K562 (cell line): ENCODE measurements at regions of chr21 and their contacts with region 1.

Region 1: GRCh38 chr21:44011980-44012527 is at the start of gene TRAPPC10:
- DNase-seq: peak; percentile 89 to 95 (median 90)
- ATAC-seq: peak; percentile 77
- H3K4me3 ChIP-seq: peak within 1 kb of the TSS; percentile 77
- H3K27ac ChIP-seq: peak within 1 kb of the TSS; percentile 93
- H3K4me1 ChIP-seq: peaks cover 33 to 39% of the 10 kb centered on the region in 2 experiments
- H3K27me3 ChIP-seq: no peaks in the 10 kb centered on the region
- CTCF ChIP-seq: no peak
- EP300 ChIP-seq: peak; percentile 4; the same call in 1 of the 2 replicates
- POLR2A ChIP-seq: peak; percentile 90
- RAD21 ChIP-seq: peak in 1 of 2 experiments; percentile 14; a peak in 2 of 4 replicates
- polyA plus RNA-seq, gene TRAPPC10: 1.1 to 1.3 TPM

Region 2: DNA sequence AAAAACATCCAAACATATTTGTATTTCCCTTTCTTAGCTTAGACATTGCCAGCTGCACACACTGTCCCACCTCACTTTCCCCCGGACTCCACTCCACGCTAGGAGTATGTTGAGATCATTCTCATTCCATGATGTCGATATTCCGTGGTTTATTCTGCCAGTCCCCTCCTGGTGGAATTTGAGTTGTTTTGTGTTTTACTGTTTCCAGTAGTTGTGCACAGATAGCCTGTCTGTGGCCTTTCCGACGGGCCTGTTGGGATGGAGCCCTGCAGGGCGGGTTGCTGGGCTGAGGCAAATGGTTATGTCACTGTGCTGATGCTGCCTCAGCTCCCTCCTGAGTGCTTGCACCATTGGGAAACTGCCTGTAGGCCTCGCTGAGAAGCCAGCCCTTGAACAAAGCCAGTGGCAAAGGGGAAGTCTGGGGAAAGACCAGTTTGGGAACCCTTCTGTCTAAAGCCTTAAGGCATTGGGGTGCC is 12.9 kb after region 1 on chr21:
- CTCF ChIA-PET with region 1: no interaction called
- POLR2A ChIA-PET with region 1: interaction called, 19 read pairs
- in situ Hi-C with region 1: no loop called
- intact Hi-C with region 1: loop called (anchors 2 kb)
- DNase-seq: peak in 3 of 4 experiments; percentile 48 to 77 (median 60)
- ATAC-seq: peak; percentile 67
- H3K4me3 ChIP-seq: no peak overlapping the region
- H3K27ac ChIP-seq: peak overlapping the region; percentile 84
- H3K4me1 ChIP-seq: peaks cover 60 to 73% of the 10 kb centered on the region in 2 experiments
- H3K27me3 ChIP-seq: no peaks in the 10 kb centered on the region; a peak in 1 of 5 replicates
- CTCF ChIP-seq: peak in 1 of 3 experiments; percentile 14; a peak in 1 of 6 replicates
- EP300 ChIP-seq: no peak
- POLR2A ChIP-seq: no peak
- RAD21 ChIP-seq: peak in 1 of 2 experiments; percentile 42; a peak in 2 of 4 replicates

Region 3: GRCh38 chr21:44299458-44300261 is 287.6 kb after region 1 on chr21 and contains the start of gene PFKL:
- CTCF ChIA-PET with region 1: no interaction called
- POLR2A ChIA-PET with region 1: no interaction called
- in situ Hi-C with region 1: no loop called
- intact Hi-C with region 1: loop called (anchors 2 kb)
- DNase-seq: peak; percentile 80 to 95 (median 93)
- ATAC-seq: peak; percentile 80
- H3K4me3 ChIP-seq: peak within 1 kb of the TSS; percentile 89
- H3K27ac ChIP-seq: peak within 1 kb of the TSS; percentile 83
- H3K4me1 ChIP-seq: peaks cover 13 to 76% of the 10 kb centered on the region in 2 experiments
- H3K27me3 ChIP-seq: no peaks in the 10 kb centered on the region
- CTCF ChIP-seq: no peak
- EP300 ChIP-seq: no peak
- POLR2A ChIP-seq: no peak; the same call in none of the 2 replicates
- RAD21 ChIP-seq: no peak
- polyA plus RNA-seq, gene PFKL: 1.1 to 3.9 TPM